Posterior cingulate gyrus (tissue), 11 donors: ENCODE measurements at regions of chr1 and their contacts with region 1.

Region 1: GRCh38 chr1:151399890-151400495 is 620 bp downstream of the PSMB4 start:
- DNase-seq: peak in 2 of 10 donors; percentile 13 to 79

Region 2: DNA sequence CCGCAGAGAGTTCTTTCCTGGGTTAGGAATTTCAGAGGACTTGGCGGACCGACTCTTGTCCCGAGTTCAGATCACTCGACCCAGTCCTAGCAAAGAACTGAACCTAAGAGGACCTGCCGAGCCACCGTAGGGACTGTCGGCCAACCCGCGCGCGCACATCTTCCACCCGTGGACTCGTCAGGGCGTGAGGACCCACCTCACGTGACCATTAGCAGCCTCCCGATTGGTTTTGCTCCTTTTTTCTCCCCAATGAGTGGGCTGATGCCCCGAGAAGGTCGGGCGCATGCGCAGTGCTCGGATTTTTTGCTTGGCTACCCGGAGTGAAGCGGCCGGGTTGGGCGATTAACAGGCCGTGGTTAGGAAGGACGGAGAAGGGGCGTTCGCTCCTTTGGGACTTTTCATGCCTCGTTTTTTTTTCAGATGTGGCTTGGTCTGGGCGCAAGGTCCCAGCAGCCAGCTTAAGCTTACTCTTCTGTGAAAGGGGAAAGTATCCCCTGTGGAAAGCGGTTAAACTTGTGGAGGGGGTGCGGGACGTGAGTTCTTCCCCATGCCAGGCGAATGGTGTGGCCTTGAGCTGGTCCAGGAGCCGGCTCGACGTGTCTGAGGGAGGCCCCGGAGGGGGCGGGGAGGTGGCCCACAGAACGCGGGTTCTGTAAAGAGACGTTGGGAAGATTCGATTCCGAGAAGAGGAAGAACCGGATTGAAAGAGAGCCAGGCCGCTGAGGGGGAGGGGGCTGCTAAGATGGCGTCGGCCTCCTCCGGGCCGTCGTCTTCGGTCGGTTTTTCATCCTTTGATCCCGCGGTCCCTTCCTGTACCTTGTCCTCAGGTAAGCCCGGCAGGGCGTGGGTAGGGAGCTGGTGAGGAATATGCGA is 201.5 kb before region 1 on chr1 and contains the start of gene PIP5K1A:
- intact Hi-C with region 1: loop called (anchors 5 kb)
- DNase-seq: peak; percentile 96 to 100 (median 99)

Region 3: GRCh38 chr1:151281969-151282882 is 117.8 kb before region 1 on chr1 and contains the start of gene ZNF687:
- intact Hi-C with region 1: loop called (anchors 1 kb)
- DNase-seq: peak; percentile 100

Region 4: GRCh38 chr1:151346769-151347522 is 53.0 kb before region 1 on chr1 and contains the start of gene RFX5:
- intact Hi-C with region 1: loop called (anchors 5 kb)
- DNase-seq: peak; percentile 84 to 99 (median 93)

Region 5: DNA sequence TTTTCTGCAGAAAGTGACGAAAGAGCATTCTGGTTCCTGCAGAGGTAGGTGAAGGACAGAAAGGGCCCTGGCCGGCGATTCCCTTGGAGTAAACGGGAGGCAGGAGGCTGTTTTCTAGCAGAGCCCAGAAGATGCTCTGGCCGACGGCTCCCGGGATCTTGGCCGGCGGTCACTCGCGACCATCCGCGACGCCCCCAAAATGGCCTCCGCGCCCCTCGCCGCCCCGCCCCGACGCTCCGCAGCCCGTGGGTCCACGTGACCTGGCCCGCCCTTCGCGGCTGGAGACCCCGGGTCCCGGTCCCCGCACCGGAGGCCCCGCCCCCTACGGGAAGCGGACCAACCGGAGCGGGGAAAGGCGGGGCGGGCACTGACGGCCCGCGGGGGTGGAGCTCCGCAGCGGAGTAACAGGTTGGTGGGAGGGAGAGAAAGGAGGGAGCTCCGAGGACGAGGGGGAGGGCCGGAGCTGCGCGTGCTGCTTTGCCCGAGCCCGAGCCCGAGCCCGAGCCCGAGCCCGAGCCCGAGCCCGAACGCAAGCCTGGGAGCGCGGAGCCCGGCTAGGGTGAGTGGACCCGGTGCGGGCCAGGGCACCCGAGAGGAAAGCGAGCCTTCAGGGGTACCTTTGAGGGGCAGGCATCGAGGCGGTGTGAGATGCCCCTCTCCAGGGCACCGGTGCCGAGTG is 111.1 kb after region 1 on chr1 and contains the start of gene CGN:
- intact Hi-C with region 1: no loop called
- DNase-seq: peak; percentile 80 to 99 (median 91)